ENCODE measurements at regions of chr10 and their contacts with region 1.

Region 1: DNA sequence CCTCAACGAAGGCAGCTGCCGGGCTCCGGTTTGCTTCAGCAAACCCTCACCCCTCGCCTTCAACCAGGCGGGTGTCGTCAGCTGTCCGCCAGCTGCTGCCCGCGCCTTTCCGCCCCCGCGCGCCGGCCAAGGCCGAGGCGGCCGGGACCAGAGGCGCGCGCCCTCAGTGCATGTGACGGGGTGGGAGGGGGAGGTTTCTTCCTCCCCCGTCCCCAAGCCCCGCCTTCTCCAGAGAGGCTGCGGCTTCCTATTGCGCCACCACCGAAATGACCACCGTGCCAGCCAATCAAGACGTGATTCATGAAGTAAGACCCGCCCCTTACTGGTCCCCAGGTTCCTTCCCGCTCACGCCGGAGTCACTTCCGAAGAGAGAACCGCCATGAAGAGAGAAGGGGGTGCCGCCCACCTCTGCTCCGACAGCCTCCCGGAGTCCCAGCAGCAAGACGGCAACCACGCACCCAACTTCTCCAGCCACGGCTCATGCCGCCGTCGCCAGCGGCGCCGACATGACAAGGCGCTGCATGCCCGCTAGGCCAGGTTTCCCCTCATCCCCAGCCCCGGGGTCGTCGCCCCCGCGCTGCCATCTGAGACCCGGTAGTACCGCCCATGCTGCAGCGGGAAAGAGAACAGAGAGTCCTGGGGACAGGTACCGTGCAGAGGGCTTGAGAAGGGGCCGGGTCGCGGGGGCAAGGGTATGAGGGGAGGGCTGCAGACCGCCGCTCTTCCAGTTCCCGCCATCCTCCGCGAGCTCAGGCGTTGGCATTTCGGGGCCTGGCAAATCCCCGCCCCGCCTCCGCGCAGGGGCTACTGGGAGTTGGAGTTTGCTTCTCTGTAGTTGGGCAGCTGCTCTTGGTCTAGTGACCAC is at the start of gene SLF2:
- DNase-seq: peak; percentile 96
- H3K4me3 Mint-ChIP-seq: peak within 1 kb of the TSS; percentile 97
- H3K27ac Mint-ChIP-seq: peak within 1 kb of the TSS; percentile 94
- H3K4me1 Mint-ChIP-seq: peaks cover 49% of the 10 kb centered on the region
- H3K27me3 Mint-ChIP-seq: no peaks in the 10 kb centered on the region
- total RNA-seq, gene SLF2: 34.9 to 37.2 TPM

Region 2: DNA sequence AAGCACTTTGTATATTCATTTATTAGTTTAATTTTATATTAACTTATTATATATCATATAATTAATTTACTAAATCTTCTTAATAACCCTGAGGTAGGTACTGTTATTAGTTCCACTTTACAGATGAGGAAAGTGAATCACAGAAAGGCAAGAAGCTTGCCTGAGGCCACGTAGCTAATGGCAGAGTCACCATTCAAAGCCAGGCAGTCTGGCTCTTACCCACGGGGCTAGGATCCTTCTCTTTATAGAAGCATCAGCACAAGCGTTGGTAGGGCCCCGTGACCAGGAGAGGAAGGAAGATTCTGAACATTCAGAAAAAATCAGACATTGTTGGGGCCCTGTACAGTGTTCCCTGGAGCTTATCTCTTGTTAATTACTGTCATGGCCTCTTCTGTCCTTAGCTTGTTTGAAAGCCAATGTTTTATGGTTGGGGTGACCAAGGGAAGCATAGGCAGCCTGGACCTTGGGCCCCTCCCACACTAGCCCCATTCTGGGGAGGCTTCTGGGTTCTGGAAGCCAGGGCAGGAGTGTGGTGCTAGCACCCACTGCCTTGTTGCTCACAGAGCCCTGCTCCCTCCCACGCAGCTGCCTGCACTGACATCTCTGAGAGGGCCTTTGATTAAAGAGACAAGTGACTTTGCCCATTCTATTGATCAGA is 31.2 kb before region 1 on chr10:
- CTCF ChIA-PET with region 1: no interaction called
- POLR2A ChIA-PET with region 1: no interaction called
- DNase-seq: no peak
- H3K4me3 Mint-ChIP-seq: no peak overlapping the region
- H3K27ac Mint-ChIP-seq: no peak overlapping the region
- H3K4me1 Mint-ChIP-seq: no peaks in the 10 kb centered on the region
- H3K27me3 Mint-ChIP-seq: peaks cover 7% of the 10 kb centered on the region

Region 3: GRCh38 chr10:100894589-100895294 is 18.1 kb before region 1 on chr10:
- CTCF ChIA-PET with region 1: interaction called, 3 read pairs
- POLR2A ChIA-PET with region 1: interaction called, 11 read pairs
- DNase-seq: peak; percentile 3
- H3K4me3 Mint-ChIP-seq: no peak overlapping the region
- H3K27ac Mint-ChIP-seq: no peak overlapping the region
- H3K4me1 Mint-ChIP-seq: no peaks in the 10 kb centered on the region
- H3K27me3 Mint-ChIP-seq: peaks cover 46% of the 10 kb centered on the region